ENCODE measurements at regions of chr22 and their contacts with region 1.

Region 1: DNA sequence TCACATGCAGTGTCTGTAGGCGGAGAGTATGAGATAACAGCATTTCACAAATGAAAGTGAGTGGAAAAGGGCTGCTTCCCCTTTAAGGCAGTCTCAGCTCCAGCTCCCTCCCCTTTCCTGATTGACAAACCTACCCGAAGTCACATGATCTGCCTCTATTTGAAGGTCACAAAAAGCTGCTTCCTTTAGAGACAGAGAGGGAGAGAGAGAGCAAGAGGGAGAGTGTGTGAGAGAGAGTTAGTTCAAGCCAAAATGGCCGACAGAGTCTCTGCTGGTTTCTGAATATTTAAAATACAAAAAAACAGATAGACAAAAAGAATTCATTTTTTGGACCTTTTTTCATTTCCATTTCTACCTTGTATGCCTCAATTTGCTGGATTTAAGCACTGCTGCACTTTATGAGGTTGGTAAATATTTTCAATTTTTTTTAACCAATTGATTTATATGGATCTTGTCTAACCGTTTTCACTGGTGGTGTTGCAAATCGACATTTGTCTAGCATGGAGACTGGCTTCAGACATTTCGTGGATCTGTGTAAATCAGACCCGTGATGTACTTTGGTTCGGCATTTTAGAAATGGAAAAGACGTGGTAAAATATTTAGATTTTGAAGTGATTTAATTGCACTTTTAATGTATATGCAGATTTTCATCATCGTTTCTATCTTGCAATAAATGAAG is at the start of gene TNRC6B:
- DNase-seq: peak in 2 of 3 donors; percentile 59 to 71
- ATAC-seq: peak; percentile 97 to 98
- H3K4me3 ChIP-seq: peak within 1 kb of the TSS; percentile 100
- H3K27ac ChIP-seq: peak within 1 kb of the TSS; percentile 92
- H3K4me1 ChIP-seq: peaks cover 7% of the 10 kb centered on the region
- H3K27me3 ChIP-seq: no peaks in the 10 kb centered on the region
- total RNA-seq, gene TNRC6B: 38.1 to 50.6 (median 39.8) TPM

Region 2: GRCh38 chr22:40067639-40068038 is 110.2 kb before region 1 on chr22:
- intact Hi-C with region 1: no loop called
- DNase-seq: no peak
- ATAC-seq: no peak
- H3K4me3 ChIP-seq: no peak overlapping the region
- H3K27ac ChIP-seq: no peak overlapping the region
- H3K4me1 ChIP-seq: peaks cover 3% of the 10 kb centered on the region
- H3K27me3 ChIP-seq: no peaks in the 10 kb centered on the region

Region 3: DNA sequence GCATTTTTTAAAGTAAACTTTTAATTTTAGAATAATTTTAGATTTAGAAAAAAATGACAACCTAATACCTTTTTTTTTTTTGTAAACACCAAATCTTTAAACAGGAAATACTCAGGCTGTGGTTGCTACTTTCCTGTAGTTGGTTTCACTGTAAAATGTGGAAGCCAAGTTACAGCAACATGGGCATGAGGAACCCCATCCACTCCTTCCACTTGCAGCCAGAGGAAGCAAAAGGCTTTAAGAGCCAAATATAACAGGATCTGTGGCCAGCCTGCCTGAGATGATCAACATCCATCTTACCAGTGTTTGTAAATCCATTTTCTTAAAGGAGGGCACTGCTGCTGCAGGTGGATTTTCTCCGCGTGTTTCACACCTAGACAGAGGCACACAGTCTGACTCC is 66.0 kb after region 1 on chr22:
- intact Hi-C with region 1: no loop called
- DNase-seq: no peak
- ATAC-seq: peak in 1 of 2 donors; percentile 29
- H3K4me3 ChIP-seq: no peak overlapping the region
- H3K27ac ChIP-seq: no peak overlapping the region
- H3K4me1 ChIP-seq: peaks cover 9% of the 10 kb centered on the region
- H3K27me3 ChIP-seq: no peaks in the 10 kb centered on the region

Region 4: GRCh38 chr22:40276996-40277823 is 99.3 kb after region 1 on chr22:
- intact Hi-C with region 1: loop called in 1 of 4 experiments (anchors 10 kb)
- DNase-seq: peak in 1 of 3 donors; percentile 38
- ATAC-seq: peak; percentile 75 to 77
- H3K4me3 ChIP-seq: peak overlapping the region; percentile 73
- H3K27ac ChIP-seq: peak overlapping the region; percentile 64
- H3K4me1 ChIP-seq: peaks cover 5% of the 10 kb centered on the region
- H3K27me3 ChIP-seq: no peaks in the 10 kb centered on the region

Region 5: GRCh38 chr22:40346178-40347118 is 168.6 kb after region 1 on chr22 and contains the start of gene ADSL:
- intact Hi-C with region 1: loop called in 1 of 4 experiments (anchors 10 kb)
- DNase-seq: peak; percentile 91 to 96 (median 95)
- ATAC-seq: peak; percentile 99
- H3K4me3 ChIP-seq: peak within 1 kb of the TSS; percentile 36
- H3K27ac ChIP-seq: peak within 1 kb of the TSS; percentile 65
- H3K4me1 ChIP-seq: no peaks in the 10 kb centered on the region
- H3K27me3 ChIP-seq: no peaks in the 10 kb centered on the region
- total RNA-seq, gene ADSL: 35.9 to 51.0 (median 39.9) TPM